Activated naive CD4-positive, alpha-beta T cell treated with anti-CD3 and anti-CD28 coated beads for 36 hours (primary cell): ENCODE measurements at regions of chr17 and their contacts with region 1.

Region 1: GRCh38 chr17:30336369-30337171 is 2.7 kb upstream of the TMIGD1 start:
- DNase-seq: peak; percentile 78
- H3K4me3 Mint-ChIP-seq: no peak overlapping the region
- H3K27ac Mint-ChIP-seq: no peak overlapping the region
- H3K4me1 Mint-ChIP-seq: peaks cover 37% of the 10 kb centered on the region
- H3K27me3 Mint-ChIP-seq: no peaks in the 10 kb centered on the region

Region 2: GRCh38 chr17:29705386-29705785 is 631.2 kb before region 1 on chr17:
- CTCF ChIA-PET with region 1: no interaction called
- intact Hi-C with region 1: loop called (anchors 1 kb)
- DNase-seq: no peak
- H3K4me3 Mint-ChIP-seq: peak overlapping the region; percentile 55
- H3K27ac Mint-ChIP-seq: peak overlapping the region; percentile 96
- H3K4me1 Mint-ChIP-seq: peaks cover 46% of the 10 kb centered on the region
- H3K27me3 Mint-ChIP-seq: no peaks in the 10 kb centered on the region

Region 3: GRCh38 chr17:30124273-30124796 is 212.2 kb before region 1 on chr17:
- CTCF ChIA-PET with region 1: interaction called, 84 read pairs
- intact Hi-C with region 1: loop called (anchors 1 kb)
- DNase-seq: no peak
- H3K4me3 Mint-ChIP-seq: no peak overlapping the region
- H3K27ac Mint-ChIP-seq: no peak overlapping the region
- H3K4me1 Mint-ChIP-seq: peaks cover 44% of the 10 kb centered on the region
- H3K27me3 Mint-ChIP-seq: no peaks in the 10 kb centered on the region

Region 4: GRCh38 chr17:30148376-30148775 is 188.2 kb before region 1 on chr17:
- CTCF ChIA-PET with region 1: no interaction called
- intact Hi-C with region 1: no loop called
- DNase-seq: no peak
- H3K4me3 Mint-ChIP-seq: no peak overlapping the region
- H3K27ac Mint-ChIP-seq: no peak overlapping the region
- H3K4me1 Mint-ChIP-seq: peaks cover 19% of the 10 kb centered on the region
- H3K27me3 Mint-ChIP-seq: no peaks in the 10 kb centered on the region

Region 5: DNA sequence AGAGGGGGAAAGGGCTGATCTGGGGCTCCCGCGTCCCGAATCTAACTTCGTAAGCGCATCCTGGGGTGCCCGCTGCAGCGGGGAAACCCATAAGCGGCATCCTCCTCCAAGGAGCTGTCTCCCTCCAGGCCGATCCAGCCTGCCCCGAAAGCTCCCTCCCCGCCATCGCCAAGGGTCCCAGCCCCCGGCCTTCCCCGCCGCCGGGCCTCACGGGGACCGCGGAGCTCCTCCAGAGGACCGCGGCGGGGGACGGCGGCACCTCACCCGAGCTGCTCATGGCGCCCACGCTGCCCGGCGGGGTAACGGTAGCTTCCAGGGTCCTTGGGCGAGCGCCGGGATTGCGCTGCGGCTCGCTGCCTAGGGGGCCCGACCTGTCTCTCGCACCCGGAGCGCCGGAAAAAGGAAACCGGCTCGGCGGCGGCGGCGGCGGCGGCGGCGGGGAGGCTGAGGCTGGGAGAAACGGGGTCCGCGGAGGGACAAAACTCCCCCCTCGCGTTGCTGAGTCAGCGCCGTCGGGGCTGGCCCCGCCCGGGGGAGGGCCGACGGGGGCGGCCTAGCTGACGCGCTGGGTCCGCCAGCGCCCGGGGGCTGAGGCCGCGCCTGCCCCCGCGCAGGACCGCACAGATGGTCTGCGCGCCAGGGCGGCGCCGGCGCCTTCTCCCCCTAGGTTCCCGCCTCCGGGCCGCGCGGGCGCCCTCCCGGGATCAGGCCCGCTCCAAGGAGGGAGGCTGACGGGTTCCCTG is 44.9 kb before region 1 on chr17 and contains the start of gene BLMH:
- CTCF ChIA-PET with region 1: interaction called, 19 read pairs
- intact Hi-C with region 1: loop called (anchors 1 kb)
- DNase-seq: peak; percentile 85
- H3K4me3 Mint-ChIP-seq: peak within 1 kb of the TSS; percentile 90
- H3K27ac Mint-ChIP-seq: peak within 1 kb of the TSS; percentile 87
- H3K4me1 Mint-ChIP-seq: peaks cover 16% of the 10 kb centered on the region
- H3K27me3 Mint-ChIP-seq: no peaks in the 10 kb centered on the region
- total RNA-seq, gene BLMH: 60.9 to 61.5 TPM

Region 6: GRCh38 chr17:30363715-30364202 is 27.2 kb after region 1 on chr17:
- CTCF ChIA-PET with region 1: interaction called, 8 read pairs
- intact Hi-C with region 1: loop called (anchors 1 kb)
- DNase-seq: peak; percentile 97
- H3K4me3 Mint-ChIP-seq: no peak overlapping the region
- H3K27ac Mint-ChIP-seq: peak overlapping the region; percentile 79
- H3K4me1 Mint-ChIP-seq: peaks cover 31% of the 10 kb centered on the region
- H3K27me3 Mint-ChIP-seq: no peaks in the 10 kb centered on the region

Region 7: GRCh38 chr17:30477083-30477773 is 140.7 kb after region 1 on chr17 and contains the start of gene GOSR1:
- CTCF ChIA-PET with region 1: interaction called, 19 read pairs
- intact Hi-C with region 1: loop called (anchors 1 kb)
- DNase-seq: peak; percentile 97
- H3K4me3 Mint-ChIP-seq: peak within 1 kb of the TSS; percentile 98
- H3K27ac Mint-ChIP-seq: peak within 1 kb of the TSS; percentile 97
- H3K4me1 Mint-ChIP-seq: peaks cover 36% of the 10 kb centered on the region
- H3K27me3 Mint-ChIP-seq: peaks cover 2% of the 10 kb centered on the region
- total RNA-seq, gene GOSR1: 33.9 to 37.3 TPM